BJ (cell line): ENCODE measurements at regions of chr12 and their contacts with region 1.

Region 1: DNA sequence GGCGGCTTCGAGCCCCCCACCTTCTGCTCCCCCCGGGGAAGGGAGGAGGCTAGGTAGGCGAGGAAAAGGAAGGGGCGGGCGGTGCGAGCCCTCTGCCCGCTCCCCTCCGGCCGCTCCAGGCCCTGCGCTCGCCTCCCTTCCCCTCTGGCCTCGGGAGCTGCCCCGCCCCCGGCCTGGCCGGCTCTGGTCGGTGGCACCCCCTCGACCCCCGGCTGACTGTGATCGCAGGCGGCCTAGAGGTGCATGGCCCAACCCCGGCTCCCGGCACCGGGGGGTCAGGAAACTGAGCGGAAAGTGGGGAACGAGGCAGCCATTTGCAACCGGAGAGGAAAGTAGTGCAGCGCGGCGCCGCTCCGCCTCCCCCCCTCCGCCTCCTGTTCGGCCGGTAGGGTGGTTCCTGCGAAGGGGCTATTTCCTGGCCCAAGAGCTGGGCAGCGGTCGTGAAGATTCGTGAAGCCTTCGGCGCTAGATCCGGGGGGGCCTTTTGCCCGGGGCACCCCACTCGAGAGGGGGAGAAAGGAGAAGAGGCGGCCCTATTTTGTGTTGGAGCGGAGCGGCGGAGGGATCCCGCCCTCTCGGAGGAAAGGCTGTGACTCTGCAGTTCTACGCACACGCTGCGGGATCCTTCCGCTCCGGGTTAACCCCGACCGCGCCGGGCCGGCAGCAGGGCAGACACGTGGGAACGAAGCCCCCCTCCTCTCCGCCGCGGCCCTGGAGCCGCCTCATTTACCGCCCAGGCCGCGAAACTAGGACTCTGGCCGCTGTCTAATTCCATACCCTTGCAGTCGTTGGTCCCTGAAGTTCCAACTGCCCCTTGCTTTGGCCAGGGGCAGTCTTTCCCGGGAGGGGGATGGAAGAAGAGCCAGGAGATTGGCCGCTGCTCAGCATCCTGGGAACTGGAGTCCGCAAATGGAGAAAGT is at the start of gene KMT2D:
- DNase-seq: peak; percentile 39
- H3K4me3 ChIP-seq: peak within 1 kb of the TSS; percentile 88
- H3K27me3 ChIP-seq: no peaks in the 10 kb centered on the region
- CTCF ChIP-seq: peak; percentile 49
- polyA plus RNA-seq, gene KMT2D: 8.2 and 9.7 TPM in 2 replicates

Region 2: GRCh38 chr12:49043856-49044258 is 16.6 kb before region 1 on chr12:
- CTCF ChIA-PET with region 1: interaction called, 12 read pairs
- POLR2A ChIA-PET with region 1: no interaction called
- DNase-seq: no peak
- H3K4me3 ChIP-seq: no peak overlapping the region
- H3K27me3 ChIP-seq: no peaks in the 10 kb centered on the region
- CTCF ChIP-seq: peak; percentile 81

Region 3: DNA sequence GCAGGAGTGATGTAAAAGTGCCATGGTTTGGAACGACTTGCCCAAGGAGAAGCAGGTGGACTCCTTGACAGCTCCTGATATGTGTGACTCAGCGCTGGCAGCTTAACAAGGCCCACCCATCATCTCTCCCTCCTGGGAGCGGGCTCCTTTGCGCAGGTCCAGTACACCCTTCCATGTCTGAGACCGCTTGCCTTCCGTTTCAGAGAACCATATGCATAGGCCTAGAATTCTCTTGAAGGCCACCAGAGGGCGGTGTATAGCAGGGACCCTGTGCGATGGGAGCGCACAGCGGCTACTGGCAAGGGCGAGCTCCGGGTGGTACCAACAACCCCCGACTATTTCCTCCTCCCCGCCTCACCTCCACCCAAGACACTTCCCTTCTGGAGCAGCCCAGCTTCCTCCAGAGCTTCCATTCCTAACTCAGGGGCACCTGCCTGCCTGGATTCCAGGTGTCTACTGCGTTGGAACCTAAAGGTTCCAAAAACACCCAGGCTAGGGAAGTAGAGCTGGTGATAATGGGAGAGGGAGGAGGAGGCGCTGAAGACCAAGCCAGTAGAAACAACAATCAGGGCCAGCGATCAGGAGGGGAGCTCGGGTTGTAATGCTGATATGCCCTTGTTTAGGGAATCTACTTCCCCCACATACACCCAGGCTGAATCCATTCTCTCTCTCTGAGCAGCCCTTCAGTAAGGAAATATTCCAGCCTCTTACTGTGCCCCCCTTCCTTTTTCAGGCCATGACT is 27.9 kb after region 1 on chr12:
- CTCF ChIA-PET with region 1: interaction called, 98 read pairs
- POLR2A ChIA-PET with region 1: no interaction called
- DNase-seq: peak; percentile 39
- H3K4me3 ChIP-seq: no peak overlapping the region
- H3K27me3 ChIP-seq: peaks cover 9% of the 10 kb centered on the region
- CTCF ChIP-seq: peak; percentile 93

Region 4: GRCh38 chr12:49110464-49111155 is 50.1 kb after region 1 on chr12 and contains the start of gene LMBR1L:
- CTCF ChIA-PET with region 1: interaction called, 24 read pairs
- POLR2A ChIA-PET with region 1: no interaction called
- DNase-seq: peak; percentile 95
- H3K4me3 ChIP-seq: peak within 1 kb of the TSS; percentile 79
- H3K27me3 ChIP-seq: no peaks in the 10 kb centered on the region
- CTCF ChIP-seq: peak; percentile 67
- polyA plus RNA-seq, gene LMBR1L: 37.2 and 63.1 TPM in 2 replicates

Region 5: DNA sequence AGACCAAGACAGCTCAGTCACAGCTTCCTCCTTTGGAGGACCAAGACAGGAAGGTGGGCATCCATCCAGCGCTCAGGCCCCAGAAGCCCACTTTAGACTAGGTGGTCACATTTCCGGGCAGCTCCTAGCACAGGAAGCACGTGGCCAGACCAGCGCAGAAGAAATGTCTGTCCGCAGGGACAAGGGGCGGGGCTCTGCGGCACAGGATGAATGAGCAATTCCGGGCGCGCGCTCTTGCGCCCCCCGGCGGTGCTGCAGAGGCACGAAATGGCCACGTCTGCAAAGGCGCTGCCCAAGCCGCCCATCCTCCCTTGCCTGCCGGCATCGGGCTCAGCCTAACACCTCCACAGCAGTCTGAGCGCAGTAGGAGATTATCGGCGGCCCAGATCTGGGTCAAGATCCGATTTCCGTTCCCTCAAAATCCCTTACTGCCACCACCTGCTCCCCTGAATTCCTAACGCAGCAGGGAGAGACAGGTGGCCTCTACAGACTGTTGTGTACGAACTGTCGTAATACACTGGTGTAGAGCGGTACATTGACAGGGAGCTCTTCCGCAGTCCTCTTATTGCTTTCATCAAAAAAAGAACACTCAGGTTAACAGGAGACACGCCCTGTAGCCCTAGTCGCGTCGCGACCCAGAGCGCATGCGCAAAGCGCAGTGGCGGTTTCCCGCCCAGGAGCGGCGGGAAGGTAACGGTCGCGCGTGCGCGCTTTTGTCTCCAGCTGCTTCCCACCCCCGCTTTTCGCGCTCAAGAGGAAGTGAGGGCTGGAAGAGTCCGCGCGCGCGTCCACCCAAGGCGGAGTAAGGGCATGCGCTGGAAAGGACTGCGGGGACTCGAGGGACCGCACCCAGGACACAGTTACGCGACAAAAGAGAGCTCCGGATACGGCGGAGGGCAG is 69.9 kb after region 1 on chr12:
- CTCF ChIA-PET with region 1: interaction called, 15 read pairs
- POLR2A ChIA-PET with region 1: no interaction called
- DNase-seq: peak; percentile 70
- H3K4me3 ChIP-seq: peak overlapping the region; percentile 100
- H3K27me3 ChIP-seq: no peaks in the 10 kb centered on the region
- CTCF ChIP-seq: peak; percentile 96

Region 6: DNA sequence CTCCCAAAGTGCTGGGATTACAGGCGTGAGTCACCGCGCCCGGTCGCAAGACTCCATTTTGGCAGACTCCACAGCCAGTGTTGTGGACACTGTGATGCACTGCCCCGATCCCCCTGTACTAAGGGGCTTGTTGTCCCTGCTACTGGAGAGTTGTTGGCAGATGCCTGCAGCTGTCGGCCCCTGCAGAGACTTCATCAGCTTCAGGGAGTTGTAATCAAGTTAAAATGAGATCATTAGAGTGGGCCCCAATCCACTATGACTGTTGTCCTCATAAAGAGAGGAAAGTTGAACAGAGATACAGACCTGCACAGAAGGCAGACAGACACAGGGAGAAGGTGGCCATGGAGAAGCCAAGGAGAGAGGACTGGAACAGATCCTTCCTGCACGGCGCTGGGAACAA is 152.1 kb after region 1 on chr12:
- CTCF ChIA-PET with region 1: no interaction called
- POLR2A ChIA-PET with region 1: no interaction called
- DNase-seq: no peak
- H3K4me3 ChIP-seq: no peak overlapping the region
- H3K27me3 ChIP-seq: no peaks in the 10 kb centered on the region
- CTCF ChIP-seq: no peak